ENCODE measurements at regions of chr19 and their contacts with region 1.

Region 1: GRCh38 chr19:38033658-38034498 is 126.9 kb downstream of the SIPA1L3 start:
- DNase-seq: peak; percentile 60
- ATAC-seq: peak; percentile 76
- H3K4me3 Mint-ChIP-seq: peak overlapping the region; percentile 79
- H3K27ac Mint-ChIP-seq: peak overlapping the region; percentile 98
- H3K4me1 Mint-ChIP-seq: peaks cover 85% of the 10 kb centered on the region
- H3K27me3 Mint-ChIP-seq: no peaks in the 10 kb centered on the region
- CTCF ChIP-seq: no peak

Region 2: DNA sequence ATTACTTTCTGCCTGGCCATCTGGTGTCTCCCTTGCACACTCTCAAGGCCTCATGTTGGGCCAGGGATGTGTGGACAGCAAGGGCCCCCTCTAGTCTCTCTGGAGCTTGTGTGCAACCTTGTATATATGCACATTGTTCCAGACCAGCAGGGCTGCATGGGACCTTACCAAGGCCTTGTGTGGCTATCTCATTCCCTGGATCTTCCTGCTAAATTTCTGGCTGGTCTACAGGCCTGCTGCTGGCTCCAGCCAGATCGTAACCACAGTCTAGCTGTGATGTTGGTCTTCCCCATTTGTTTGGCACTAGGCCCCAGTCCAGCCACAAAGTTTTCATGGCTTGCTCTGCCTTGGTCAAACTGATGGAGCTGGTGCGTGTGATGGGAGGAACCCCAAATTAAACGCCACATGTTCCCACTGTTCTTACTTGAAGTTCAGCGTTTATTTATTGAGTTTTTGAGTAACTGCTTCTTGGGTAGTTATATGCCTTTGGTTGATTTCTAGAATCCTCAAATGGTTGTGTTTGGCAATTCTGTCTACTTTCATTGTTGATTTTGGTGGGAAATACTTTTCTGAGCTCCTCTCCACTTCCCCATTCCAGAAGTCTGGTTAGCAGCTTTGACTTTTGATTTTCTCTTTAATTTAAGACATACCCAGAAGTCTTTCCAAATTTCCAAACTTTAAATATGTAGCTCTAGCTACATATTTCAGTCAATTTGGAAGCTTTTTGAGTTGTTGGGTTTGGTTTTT is 70.5 kb before region 1 on chr19:
- CTCF ChIA-PET with region 1: no interaction called
- POLR2A ChIA-PET with region 1: interaction called, 13 read pairs
- intact Hi-C with region 1: no loop called
- DNase-seq: no peak
- ATAC-seq: no peak
- H3K4me3 Mint-ChIP-seq: peak overlapping the region; percentile 4
- H3K27ac Mint-ChIP-seq: peak overlapping the region; percentile 88
- H3K4me1 Mint-ChIP-seq: peaks cover 80% of the 10 kb centered on the region
- H3K27me3 Mint-ChIP-seq: no peaks in the 10 kb centered on the region
- CTCF ChIP-seq: no peak

Region 3: GRCh38 chr19:38004521-38005223 is 29.2 kb before region 1 on chr19:
- CTCF ChIA-PET with region 1: interaction called, 9 read pairs
- POLR2A ChIA-PET with region 1: interaction called, 61 read pairs
- intact Hi-C with region 1: loop called (anchors 1 kb)
- DNase-seq: peak; percentile 34
- ATAC-seq: peak; percentile 60
- H3K4me3 Mint-ChIP-seq: no peak overlapping the region
- H3K27ac Mint-ChIP-seq: no peak overlapping the region
- H3K4me1 Mint-ChIP-seq: peaks cover 39% of the 10 kb centered on the region
- H3K27me3 Mint-ChIP-seq: no peaks in the 10 kb centered on the region
- CTCF ChIP-seq: no peak

Region 4: GRCh38 chr19:38022791-38023670 is 10.8 kb before region 1 on chr19:
- CTCF ChIA-PET with region 1: interaction called, 3 read pairs
- POLR2A ChIA-PET with region 1: interaction called, 16 read pairs
- intact Hi-C with region 1: loop called (anchors 1 kb)
- DNase-seq: no peak
- ATAC-seq: no peak
- H3K4me3 Mint-ChIP-seq: peak overlapping the region; percentile 21
- H3K27ac Mint-ChIP-seq: peak overlapping the region; percentile 79
- H3K4me1 Mint-ChIP-seq: peaks cover 93% of the 10 kb centered on the region
- H3K27me3 Mint-ChIP-seq: no peaks in the 10 kb centered on the region
- CTCF ChIP-seq: no peak

Region 5: GRCh38 chr19:38057959-38058710 is 24.3 kb after region 1 on chr19:
- CTCF ChIA-PET with region 1: interaction called, 5 read pairs
- POLR2A ChIA-PET with region 1: interaction called, 21 read pairs
- intact Hi-C with region 1: no loop called
- DNase-seq: no peak
- ATAC-seq: peak; percentile 23
- H3K4me3 Mint-ChIP-seq: peak overlapping the region; percentile 15
- H3K27ac Mint-ChIP-seq: peak overlapping the region; percentile 76
- H3K4me1 Mint-ChIP-seq: peaks cover 56% of the 10 kb centered on the region
- H3K27me3 Mint-ChIP-seq: no peaks in the 10 kb centered on the region
- CTCF ChIP-seq: no peak

Region 6: GRCh38 chr19:38095411-38096308 is 61.8 kb after region 1 on chr19:
- CTCF ChIA-PET with region 1: interaction called, 8 read pairs
- POLR2A ChIA-PET with region 1: no interaction called
- intact Hi-C with region 1: loop called (anchors 1 kb)
- DNase-seq: peak; percentile 59
- ATAC-seq: peak; percentile 85
- H3K4me3 Mint-ChIP-seq: no peak overlapping the region
- H3K27ac Mint-ChIP-seq: peak overlapping the region; percentile 85
- H3K4me1 Mint-ChIP-seq: peaks cover 18% of the 10 kb centered on the region
- H3K27me3 Mint-ChIP-seq: no peaks in the 10 kb centered on the region
- CTCF ChIP-seq: peak; percentile 33